Panc1 (cell line): ENCODE measurements at regions of chr18 and their contacts with region 1.

Region 1: GRCh38 chr18:79069792-79070151 is 578 bp downstream of the ATP9B start:
- DNase-seq: no peak
- ATAC-seq: no peak
- H3K4me3 ChIP-seq: peak overlapping the region; percentile 78 to 98
- H3K27ac ChIP-seq: peak overlapping the region; percentile 93
- H3K4me1 ChIP-seq: peaks cover 14% of the 10 kb centered on the region; the same call in 1 of the 2 replicates
- H3K27me3 ChIP-seq: no peaks in the 10 kb centered on the region
- CTCF ChIP-seq: no peak

Region 2: DNA sequence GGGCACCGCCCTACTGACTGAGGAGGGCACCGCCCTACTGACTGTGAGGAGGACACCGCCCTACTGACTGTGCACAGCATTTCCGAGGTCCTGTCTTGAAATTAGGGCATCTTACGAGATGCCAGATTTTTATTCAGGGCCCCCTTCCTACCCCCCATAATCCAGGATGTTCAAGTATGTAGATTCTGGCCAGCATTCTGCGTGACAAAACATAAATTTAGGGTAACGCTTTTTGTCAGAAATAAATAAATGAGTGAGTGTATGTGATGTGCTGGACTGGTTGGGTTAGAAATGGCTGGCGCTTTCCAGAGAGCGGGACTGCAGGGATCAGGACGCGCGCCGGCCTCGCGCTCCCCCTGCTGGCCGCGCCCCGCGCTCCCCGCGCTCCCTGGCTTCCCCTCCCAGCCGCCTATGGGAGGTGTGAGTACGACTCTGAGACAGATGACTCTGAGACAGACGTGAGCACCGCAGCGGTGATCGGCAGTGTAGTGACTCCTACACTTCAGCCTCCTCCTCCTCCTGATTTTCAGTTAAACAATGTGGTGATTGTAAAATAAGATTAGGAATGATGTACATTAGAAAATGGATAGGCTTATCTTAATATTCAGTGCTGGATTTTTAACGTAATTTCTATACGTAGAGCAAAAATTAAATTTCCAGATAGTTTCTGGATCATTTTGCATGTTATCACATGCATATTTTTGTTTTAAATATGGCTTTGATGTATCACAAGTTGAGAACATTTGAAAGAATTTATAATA is 176.8 kb after region 1 on chr18:
- CTCF ChIA-PET with region 1: no interaction called
- POLR2A ChIA-PET with region 1: no interaction called
- in situ Hi-C with region 1: no loop called
- intact Hi-C with region 1: loop called (anchors 5 kb)
- DNase-seq: peak; percentile 95
- ATAC-seq: peak; percentile 99
- H3K4me3 ChIP-seq: peak overlapping the region; percentile 58 to 64
- H3K27ac ChIP-seq: peak overlapping the region; percentile 96
- H3K4me1 ChIP-seq: peaks cover 16% of the 10 kb centered on the region
- H3K27me3 ChIP-seq: no peaks in the 10 kb centered on the region
- CTCF ChIP-seq: peak; percentile 100